ENCODE measurements at regions of chr1 and their contacts with region 1.

Region 1: GRCh38 chr1:200959411-200959921 is 64.0 kb downstream of the KIF21B start:
- DNase-seq: no peak
- ATAC-seq: peak; percentile 88
- H3K4me3 Mint-ChIP-seq: no peak overlapping the region
- H3K27ac Mint-ChIP-seq: no peak overlapping the region
- H3K4me1 Mint-ChIP-seq: peaks cover 6% of the 10 kb centered on the region; the same call in 1 of the 2 replicates
- H3K27me3 Mint-ChIP-seq: peaks cover 5% of the 10 kb centered on the region; the same call in 1 of the 2 replicates
- CTCF ChIP-seq: no peak

Region 2: GRCh38 chr1:200938955-200939354 is 20.5 kb before region 1 on chr1:
- CTCF ChIA-PET with region 1: no interaction called
- POLR2A ChIA-PET with region 1: interaction called, 10 read pairs
- DNase-seq: no peak
- ATAC-seq: no peak
- H3K4me3 Mint-ChIP-seq: no peak overlapping the region
- H3K27ac Mint-ChIP-seq: no peak overlapping the region
- H3K4me1 Mint-ChIP-seq: no peaks in the 10 kb centered on the region
- H3K27me3 Mint-ChIP-seq: no peaks in the 10 kb centered on the region
- CTCF ChIP-seq: no peak